CD8-positive, alpha-beta T cell (primary cell): ENCODE measurements at regions of chr6 and their contacts with region 1.

Region 1: DNA sequence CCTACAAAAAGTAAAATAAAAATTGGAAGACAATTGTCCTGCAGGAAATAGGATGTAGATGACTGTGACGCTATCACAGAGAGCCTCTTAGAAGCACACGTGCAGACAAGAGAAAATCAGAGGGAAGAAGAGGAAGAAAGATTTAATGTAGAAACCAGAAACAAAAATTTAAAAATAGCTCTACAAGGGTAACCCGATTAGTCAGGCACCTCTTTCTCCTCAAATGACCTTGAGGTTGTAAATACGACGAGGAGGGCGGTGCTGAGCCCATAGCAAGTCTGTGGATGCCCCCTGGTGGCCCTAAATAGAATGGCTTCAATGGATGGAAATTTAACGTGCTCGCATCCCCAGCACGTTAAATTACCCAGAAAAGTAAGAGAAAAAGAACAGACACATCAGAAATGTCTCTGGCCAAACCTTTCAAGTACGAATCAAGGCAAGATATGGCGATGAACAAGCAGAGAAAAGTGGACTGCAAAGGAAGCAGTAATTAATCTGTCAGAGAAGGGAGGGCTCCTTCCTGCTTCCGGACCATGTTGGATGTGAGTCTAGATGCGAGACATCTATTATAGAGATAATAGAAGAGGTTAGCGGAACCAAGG is 4.2 kb upstream of the PRPH2 start:
- DNase-seq: peak; percentile 29 to 95 (median 76)
- ATAC-seq: peak; percentile 98
- H3K4me3 ChIP-seq: peak overlapping the region; percentile 54 to 73
- H3K4me3 Mint-ChIP-seq: peak overlapping the region; percentile 88
- H3K27ac ChIP-seq: peak overlapping the region; percentile 75 to 85
- H3K27ac Mint-ChIP-seq: peak overlapping the region; percentile 97
- H3K4me1 ChIP-seq: peaks cover 13% of the 10 kb centered on the region
- H3K4me1 Mint-ChIP-seq: peaks cover 17% of the 10 kb centered on the region
- H3K27me3 ChIP-seq: no peaks in the 10 kb centered on the region
- H3K27me3 Mint-ChIP-seq: no peaks in the 10 kb centered on the region
- CTCF ChIP-seq: peak; percentile 88

Region 2: GRCh38 chr6:42661540-42662153 is 64.9 kb before region 1 on chr6:
- CTCF ChIA-PET with region 1: interaction called, 76 read pairs
- POLR2A ChIA-PET with region 1: interaction called, 11 read pairs
- intact Hi-C with region 1: loop called (anchors 1 kb)
- DNase-seq: peak; percentile 75 to 93 (median 84)
- ATAC-seq: peak; percentile 99
- H3K4me3 ChIP-seq: no peak overlapping the region
- H3K4me3 Mint-ChIP-seq: no peak overlapping the region
- H3K27ac ChIP-seq: no peak overlapping the region
- H3K27ac Mint-ChIP-seq: peak overlapping the region; percentile 2
- H3K4me1 ChIP-seq: no peaks in the 10 kb centered on the region
- H3K4me1 Mint-ChIP-seq: peaks cover 2% of the 10 kb centered on the region
- H3K27me3 ChIP-seq: no peaks in the 10 kb centered on the region
- H3K27me3 Mint-ChIP-seq: no peaks in the 10 kb centered on the region
- CTCF ChIP-seq: peak; percentile 90

Region 3: DNA sequence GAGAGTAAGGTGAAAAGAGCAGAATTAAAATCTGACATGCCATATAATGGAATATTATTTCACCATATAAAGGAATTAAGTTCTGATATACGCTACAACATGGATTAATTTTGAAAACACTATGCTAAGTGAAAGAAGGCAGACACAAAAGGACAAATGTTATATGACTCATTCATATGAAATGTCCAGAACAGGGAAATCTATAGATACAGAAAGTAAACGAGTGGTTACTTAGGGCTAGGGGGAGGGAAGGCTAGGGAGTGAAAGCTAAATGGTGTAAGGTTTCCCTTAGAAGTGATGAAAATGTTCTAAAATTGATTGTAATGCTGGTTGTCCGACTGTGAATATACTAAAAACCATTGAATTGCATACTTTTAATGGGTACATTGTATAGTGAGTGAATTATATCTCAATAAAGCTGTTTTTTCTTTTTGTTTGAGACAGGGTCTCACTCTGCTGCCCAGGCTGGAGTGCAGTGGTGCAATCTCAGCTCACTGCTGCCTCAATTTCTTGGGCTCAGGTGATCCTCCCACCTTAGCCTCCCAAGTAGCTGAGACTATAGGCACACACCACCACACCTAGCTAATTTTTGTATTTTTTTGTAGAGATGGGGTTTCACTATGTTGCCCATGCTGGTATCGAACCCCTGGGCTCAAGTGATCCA is 12.4 kb before region 1 on chr6:
- CTCF ChIA-PET with region 1: interaction called, 13 read pairs
- POLR2A ChIA-PET with region 1: interaction called, 7 read pairs
- intact Hi-C with region 1: no loop called
- DNase-seq: no peak
- ATAC-seq: no peak
- H3K4me3 ChIP-seq: no peak overlapping the region
- H3K4me3 Mint-ChIP-seq: no peak overlapping the region
- H3K27ac ChIP-seq: no peak overlapping the region
- H3K27ac Mint-ChIP-seq: no peak overlapping the region
- H3K4me1 ChIP-seq: no peaks in the 10 kb centered on the region
- H3K4me1 Mint-ChIP-seq: peaks cover 3% of the 10 kb centered on the region
- H3K27me3 ChIP-seq: no peaks in the 10 kb centered on the region
- H3K27me3 Mint-ChIP-seq: no peaks in the 10 kb centered on the region
- CTCF ChIP-seq: no peak

Region 4: DNA sequence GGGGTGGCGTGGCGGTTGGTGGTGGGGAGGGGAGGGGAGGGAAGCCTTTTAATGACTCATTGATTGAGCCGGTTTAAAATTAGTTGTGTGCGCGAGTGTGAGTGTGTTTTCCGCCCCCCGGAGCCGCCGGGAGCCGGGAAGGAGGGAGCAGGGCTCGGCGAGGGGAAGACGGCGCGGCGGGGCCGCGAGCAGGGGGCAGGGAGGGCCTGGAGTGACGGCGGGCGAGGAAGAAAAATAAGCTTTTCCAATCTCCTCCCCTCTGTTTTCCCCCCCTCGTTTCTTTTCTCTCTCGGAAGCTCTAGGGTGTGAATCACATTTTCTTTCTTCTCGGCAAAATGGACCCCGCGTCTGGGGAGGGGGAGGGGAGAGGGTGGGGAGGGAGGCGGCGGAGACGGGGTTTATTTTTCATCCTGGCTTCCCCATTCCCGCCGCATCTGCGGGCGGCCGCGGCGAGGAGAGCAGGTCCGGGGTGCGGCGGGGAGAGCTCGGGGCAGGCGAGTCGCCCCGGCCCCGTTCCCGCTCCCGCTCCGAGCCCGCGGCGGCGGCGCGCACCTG is 56.1 kb after region 1 on chr6:
- CTCF ChIA-PET with region 1: interaction called, 5 read pairs
- POLR2A ChIA-PET with region 1: interaction called, 58 read pairs
- intact Hi-C with region 1: loop called (anchors 1 to 5 kb)
- DNase-seq: peak; percentile 62 to 90 (median 78)
- ATAC-seq: peak; percentile 53
- H3K4me3 ChIP-seq: peak overlapping the region; percentile 74 to 98
- H3K4me3 Mint-ChIP-seq: peak overlapping the region; percentile 96
- H3K27ac ChIP-seq: peak overlapping the region; percentile 100
- H3K27ac Mint-ChIP-seq: peak overlapping the region; percentile 100
- H3K4me1 ChIP-seq: peaks cover 46% of the 10 kb centered on the region
- H3K4me1 Mint-ChIP-seq: peaks cover 26% of the 10 kb centered on the region
- H3K27me3 ChIP-seq: no peaks in the 10 kb centered on the region
- H3K27me3 Mint-ChIP-seq: no peaks in the 10 kb centered on the region
- CTCF ChIP-seq: no peak

Region 5: GRCh38 chr6:42860481-42860880 is 133.9 kb after region 1 on chr6:
- CTCF ChIA-PET with region 1: no interaction called
- POLR2A ChIA-PET with region 1: no interaction called
- intact Hi-C with region 1: no loop called
- DNase-seq: no peak
- ATAC-seq: no peak
- H3K4me3 ChIP-seq: no peak overlapping the region
- H3K4me3 Mint-ChIP-seq: no peak overlapping the region
- H3K27ac ChIP-seq: no peak overlapping the region
- H3K27ac Mint-ChIP-seq: no peak overlapping the region
- H3K4me1 ChIP-seq: no peaks in the 10 kb centered on the region
- H3K4me1 Mint-ChIP-seq: peaks cover 2% of the 10 kb centered on the region
- H3K27me3 ChIP-seq: no peaks in the 10 kb centered on the region
- H3K27me3 Mint-ChIP-seq: no peaks in the 10 kb centered on the region
- CTCF ChIP-seq: no peak

Region 6: GRCh38 chr6:42879372-42880239 is 153.0 kb after region 1 on chr6 and contains the start of gene RPL7L1:
- CTCF ChIA-PET with region 1: interaction called, 16 read pairs
- POLR2A ChIA-PET with region 1: interaction called, 15 read pairs
- intact Hi-C with region 1: loop called (anchors 1 to 2 kb)
- DNase-seq: peak; percentile 69 to 93 (median 82)
- ATAC-seq: peak; percentile 92
- H3K4me3 ChIP-seq: peak within 1 kb of the TSS; percentile 71 to 83
- H3K4me3 Mint-ChIP-seq: peak within 1 kb of the TSS; percentile 98
- H3K27ac ChIP-seq: peak within 1 kb of the TSS; percentile 92 to 94
- H3K27ac Mint-ChIP-seq: peak within 1 kb of the TSS; percentile 99
- H3K4me1 ChIP-seq: peaks cover 19% of the 10 kb centered on the region
- H3K4me1 Mint-ChIP-seq: peaks cover 27% of the 10 kb centered on the region
- H3K27me3 ChIP-seq: no peaks in the 10 kb centered on the region
- H3K27me3 Mint-ChIP-seq: no peaks in the 10 kb centered on the region
- CTCF ChIP-seq: no peak
- total RNA-seq, gene RPL7L1: 67.9 to 68.6 TPM

Region 7: GRCh38 chr6:42901536-42901957 is 175.0 kb after region 1 on chr6:
- CTCF ChIA-PET with region 1: interaction called, 7 read pairs
- POLR2A ChIA-PET with region 1: no interaction called
- intact Hi-C with region 1: loop called (anchors 2 kb)
- DNase-seq: peak; percentile 32 to 89 (median 67)
- ATAC-seq: peak; percentile 100
- H3K4me3 ChIP-seq: no peak overlapping the region
- H3K4me3 Mint-ChIP-seq: peak overlapping the region; percentile 63
- H3K27ac ChIP-seq: no peak overlapping the region
- H3K27ac Mint-ChIP-seq: no peak overlapping the region
- H3K4me1 ChIP-seq: peaks cover 6% of the 10 kb centered on the region
- H3K4me1 Mint-ChIP-seq: peaks cover 17% of the 10 kb centered on the region
- H3K27me3 ChIP-seq: no peaks in the 10 kb centered on the region
- H3K27me3 Mint-ChIP-seq: no peaks in the 10 kb centered on the region
- CTCF ChIP-seq: peak; percentile 92